Panc1 (cell line): ENCODE measurements at regions of chr7 and their contacts with region 1.

Region 1: DNA sequence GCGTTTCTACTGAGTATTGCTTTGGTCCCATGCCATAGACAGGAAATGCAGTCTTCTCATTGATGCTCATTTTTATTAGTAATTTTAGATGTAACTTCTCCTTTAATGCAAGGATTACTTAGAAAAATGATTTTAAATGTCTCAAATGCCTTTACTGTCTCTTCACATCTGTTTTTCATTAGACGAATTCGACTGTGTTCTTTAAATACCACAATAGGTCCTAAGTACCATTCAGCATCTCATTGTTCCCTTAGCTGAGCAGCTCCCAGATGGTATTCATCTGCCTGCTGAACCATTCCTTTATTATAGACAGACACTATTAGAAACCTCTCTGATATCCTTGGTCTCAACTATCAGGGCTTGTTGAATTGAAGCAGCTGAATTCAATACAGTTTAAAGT is 113.6 kb downstream of the LSMEM1 start:
- DNase-seq: no peak
- ATAC-seq: no peak
- H3K4me3 ChIP-seq: no peak overlapping the region
- H3K27ac ChIP-seq: no peak overlapping the region
- H3K4me1 ChIP-seq: no peaks in the 10 kb centered on the region
- H3K27me3 ChIP-seq: no peaks in the 10 kb centered on the region
- CTCF ChIP-seq: no peak

Region 2: GRCh38 chr7:112806156-112806555 is 211.8 kb after region 1 on chr7:
- CTCF ChIA-PET with region 1: no interaction called
- POLR2A ChIA-PET with region 1: interaction called, 10 read pairs
- in situ Hi-C with region 1: no loop called
- intact Hi-C with region 1: no loop called
- DNase-seq: no peak
- ATAC-seq: no peak
- H3K4me3 ChIP-seq: no peak overlapping the region
- H3K27ac ChIP-seq: no peak overlapping the region
- H3K4me1 ChIP-seq: no peaks in the 10 kb centered on the region
- H3K27me3 ChIP-seq: no peaks in the 10 kb centered on the region
- CTCF ChIP-seq: no peak